Activated T-helper 1 cell treated with anti-CD3 and anti-CD28 coated beads, Interleukin-12 subunit alpha, Interleukin-12 subunit beta, Interleukin-2, Interleukin-4 antibody, amounts not matched to agents 30 ng/mL and 10 ng/mL and 1 ng/mL, durations not matched to agents 14 hours and 24 hours and 36 hours (primary cell): ENCODE measurements at regions of chr4 and their contacts with region 1.

Region 1: DNA sequence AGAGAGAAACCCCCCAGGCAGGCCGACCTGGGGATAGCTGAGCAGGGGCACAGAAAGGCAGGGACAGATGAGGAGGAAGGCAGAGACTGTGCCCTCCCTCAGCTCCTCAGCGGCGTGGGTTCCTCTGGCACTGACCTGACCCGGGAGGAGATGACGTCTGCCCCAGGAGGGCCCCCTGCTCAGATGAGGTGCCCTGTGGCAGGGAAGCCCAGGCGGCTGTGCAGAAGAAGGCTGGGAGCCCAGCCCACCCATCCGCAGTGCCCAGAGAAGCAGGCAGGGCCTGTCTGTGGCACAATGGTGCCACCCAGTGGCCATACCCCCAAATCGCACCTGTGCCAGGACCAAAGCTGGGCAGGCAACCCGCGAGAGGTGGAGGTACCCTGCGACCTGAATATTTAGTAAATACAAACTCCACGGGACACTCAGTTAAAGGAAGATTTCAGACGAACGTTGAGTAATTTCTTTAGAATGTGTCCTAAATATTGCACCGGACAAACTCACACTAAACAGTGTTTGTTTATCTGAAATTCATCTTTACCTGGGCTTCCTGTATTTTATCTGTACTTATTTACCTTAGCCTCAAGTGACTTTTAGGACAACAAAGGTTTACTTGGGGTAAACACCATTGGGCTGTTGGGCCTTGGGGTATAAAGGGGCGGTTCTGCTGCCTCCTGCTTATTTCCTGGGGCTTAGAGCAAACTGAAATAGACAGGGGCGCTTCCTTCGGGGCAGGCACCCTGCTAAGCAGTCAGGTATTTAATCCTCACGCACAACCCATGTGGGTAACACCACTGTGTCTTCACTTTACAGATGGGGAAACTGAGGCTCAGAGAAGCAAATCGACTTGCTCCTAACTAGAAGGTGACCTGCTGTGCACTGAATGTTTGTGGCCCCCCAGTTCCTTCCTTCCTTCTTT is 46.5 kb upstream of the HMX1 start:
- DNase-seq: peak; percentile 48
- H3K4me3 Mint-ChIP-seq: no peak overlapping the region
- H3K27ac Mint-ChIP-seq: no peak overlapping the region
- H3K4me1 Mint-ChIP-seq: no peaks in the 10 kb centered on the region
- H3K27me3 Mint-ChIP-seq: no peaks in the 10 kb centered on the region

Region 2: GRCh38 chr4:7266525-7267292 is 1651.4 kb before region 1 on chr4:
- intact Hi-C with region 1: loop called (anchors 10 kb)
- DNase-seq: no peak
- H3K4me3 Mint-ChIP-seq: no peak overlapping the region
- H3K27ac Mint-ChIP-seq: no peak overlapping the region
- H3K4me1 Mint-ChIP-seq: no peaks in the 10 kb centered on the region
- H3K27me3 Mint-ChIP-seq: no peaks in the 10 kb centered on the region

Region 3: GRCh38 chr4:8571702-8572596 is 346.2 kb before region 1 on chr4:
- intact Hi-C with region 1: no loop called
- DNase-seq: no peak
- H3K4me3 Mint-ChIP-seq: no peak overlapping the region
- H3K27ac Mint-ChIP-seq: no peak overlapping the region
- H3K4me1 Mint-ChIP-seq: no peaks in the 10 kb centered on the region
- H3K27me3 Mint-ChIP-seq: no peaks in the 10 kb centered on the region